CD4-positive, alpha-beta memory T cell (primary cell): ENCODE measurements at regions of chr15 and their contacts with region 1.

Region 1: DNA sequence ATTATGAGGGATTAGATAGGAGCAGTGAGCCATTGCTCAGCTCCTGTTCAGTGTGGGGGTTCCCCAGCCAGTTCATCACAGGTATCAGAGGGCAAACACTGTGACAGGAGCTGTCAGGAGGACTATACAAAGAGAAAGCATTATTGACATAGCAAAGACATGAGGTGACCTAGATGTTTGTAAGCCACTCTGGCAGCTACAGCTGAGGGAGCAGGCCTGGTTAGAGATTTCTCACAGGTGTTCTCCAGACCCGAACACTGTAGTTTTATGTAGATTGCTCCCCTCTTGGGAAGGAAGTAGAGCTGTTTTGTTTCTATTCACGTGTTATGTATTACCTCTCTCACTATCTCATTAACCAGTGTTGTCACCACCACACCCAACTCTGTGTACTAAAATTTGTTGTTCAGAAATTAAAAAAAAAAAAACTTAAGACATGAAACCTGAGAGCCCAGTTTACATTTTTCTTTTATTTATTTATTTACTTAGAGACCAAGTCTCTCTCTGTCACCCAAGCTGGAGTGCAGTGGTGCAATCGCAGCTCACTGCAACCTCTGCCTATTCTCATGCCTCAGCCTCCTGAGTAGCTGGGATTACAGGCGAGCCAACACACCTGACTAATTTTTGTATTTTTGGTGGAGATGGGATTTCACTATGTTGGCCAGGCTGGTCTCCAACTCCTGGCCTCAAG is 123.7 kb downstream of the RBPMS2 start:
- DNase-seq: peak; percentile 53 to 75 (median 64)
- H3K4me3 ChIP-seq: no peak overlapping the region
- H3K4me3 Mint-ChIP-seq: peak overlapping the region in 7 of 8 donors; percentile 57 to 89 (median 75)
- H3K27ac ChIP-seq: peak overlapping the region; percentile 44
- H3K27ac Mint-ChIP-seq: peak overlapping the region; percentile 77 to 94 (median 93)
- H3K4me1 ChIP-seq: peaks cover 50% of the 10 kb centered on the region
- H3K4me1 Mint-ChIP-seq: peaks cover 27 to 46% (median 39%) of the 10 kb centered on the region in 4 donors
- H3K27me3 ChIP-seq: no peaks in the 10 kb centered on the region
- H3K27me3 Mint-ChIP-seq: no peaks in the 10 kb centered on the region

Region 2: DNA sequence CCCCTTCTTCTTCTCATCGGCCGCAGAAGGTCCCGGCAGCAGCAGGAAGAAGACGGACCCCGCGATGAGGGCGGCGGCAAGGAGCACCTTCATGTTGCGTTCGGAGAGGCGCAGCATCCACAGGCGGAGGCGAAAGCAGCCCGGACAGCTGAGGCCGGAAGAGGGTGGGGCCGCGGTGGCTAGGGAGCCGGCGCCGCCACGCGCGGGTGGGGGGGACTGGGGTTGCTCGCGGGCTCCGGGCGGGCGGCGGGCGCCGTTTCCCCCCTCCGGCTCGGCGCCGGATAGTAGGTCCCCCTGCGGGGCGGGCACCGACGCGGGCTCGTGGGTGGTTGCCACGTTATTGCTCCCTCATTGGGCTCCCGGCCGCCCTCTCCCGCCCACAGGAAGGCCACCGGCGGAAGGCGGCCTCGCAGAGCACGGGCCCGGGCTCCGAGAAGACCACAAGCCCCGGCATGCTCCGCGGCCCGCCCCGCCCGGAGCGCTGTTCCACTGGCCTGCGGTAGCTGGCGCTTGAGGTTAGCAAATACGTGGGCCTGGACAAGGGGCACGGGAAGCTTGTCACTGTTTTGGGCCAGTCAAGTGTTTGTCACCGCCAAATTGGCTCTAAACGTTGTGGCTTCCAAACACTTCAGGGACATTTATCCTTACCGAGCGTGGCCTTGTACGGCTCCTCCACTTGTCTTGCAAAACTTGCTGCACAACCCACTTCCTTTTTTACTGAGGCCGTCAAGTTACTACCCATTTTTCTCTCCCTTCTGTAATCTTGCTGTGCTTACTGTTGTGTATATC is 488.7 kb before region 1 on chr15 and contains the start of gene PPIB:
- CTCF ChIA-PET with region 1: no interaction called
- POLR2A ChIA-PET with region 1: no interaction called
- intact Hi-C with region 1: loop called (anchors 10 kb)
- DNase-seq: peak; percentile 96 to 98 (median 97)
- H3K4me3 ChIP-seq: peak within 1 kb of the TSS; percentile 68 to 71
- H3K4me3 Mint-ChIP-seq: peak within 1 kb of the TSS; percentile 81 to 95 (median 90)
- H3K27ac ChIP-seq: peak within 1 kb of the TSS; percentile 80
- H3K27ac Mint-ChIP-seq: peak within 1 kb of the TSS; percentile 85 to 98 (median 96)
- H3K4me1 ChIP-seq: peaks cover 54% of the 10 kb centered on the region
- H3K4me1 Mint-ChIP-seq: peaks cover 28 to 53% (median 40%) of the 10 kb centered on the region in 4 donors
- H3K27me3 ChIP-seq: no peaks in the 10 kb centered on the region
- H3K27me3 Mint-ChIP-seq: no peaks in the 10 kb centered on the region
- total RNA-seq, gene PPIB: 247 to 271 TPM

Region 3: DNA sequence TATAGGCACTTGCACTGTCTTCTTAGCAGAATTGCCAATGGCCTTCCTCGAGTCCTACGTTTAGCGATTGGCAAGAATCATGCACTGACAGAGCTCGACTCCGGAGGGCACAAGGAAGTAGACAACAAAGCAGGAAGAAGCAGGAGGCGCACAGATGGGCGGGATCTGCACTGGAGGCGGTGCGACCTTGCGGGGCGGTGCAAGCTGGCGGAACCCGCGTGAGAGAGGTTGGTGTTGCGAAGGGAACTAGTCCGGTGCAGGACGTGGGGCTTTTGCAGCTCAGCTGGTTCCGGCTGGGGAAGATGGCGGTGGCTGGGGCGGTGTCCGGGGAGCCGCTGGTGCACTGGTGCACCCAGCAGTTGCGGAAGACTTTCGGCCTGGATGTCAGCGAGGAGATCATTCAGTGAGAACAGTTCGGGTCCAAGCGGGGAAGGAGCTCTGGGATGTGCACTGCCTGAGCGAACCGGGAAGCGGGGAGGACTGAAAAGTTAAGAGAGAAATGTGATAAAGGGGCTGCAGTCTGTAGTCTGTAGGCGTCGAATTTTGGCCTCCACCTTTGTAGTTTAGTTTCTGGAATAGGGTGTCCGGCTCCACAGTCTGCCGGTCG is 264.1 kb before region 1 on chr15 and contains the start of gene TRIP4:
- CTCF ChIA-PET with region 1: interaction called, 15 read pairs
- POLR2A ChIA-PET with region 1: interaction called, 6 read pairs
- intact Hi-C with region 1: no loop called
- DNase-seq: peak; percentile 95 to 98 (median 96)
- H3K4me3 ChIP-seq: peak within 1 kb of the TSS; percentile 79 to 89
- H3K4me3 Mint-ChIP-seq: peak within 1 kb of the TSS; percentile 96 to 100 (median 98)
- H3K27ac ChIP-seq: peak within 1 kb of the TSS; percentile 64
- H3K27ac Mint-ChIP-seq: peak within 1 kb of the TSS; percentile 80 to 99 (median 96)
- H3K4me1 ChIP-seq: peaks cover 12% of the 10 kb centered on the region
- H3K4me1 Mint-ChIP-seq: peaks cover 16 to 19% (median 19%) of the 10 kb centered on the region in 4 donors
- H3K27me3 ChIP-seq: no peaks in the 10 kb centered on the region
- H3K27me3 Mint-ChIP-seq: no peaks in the 10 kb centered on the region
- total RNA-seq, gene TRIP4: 28.2 to 29.4 TPM

Region 4: DNA sequence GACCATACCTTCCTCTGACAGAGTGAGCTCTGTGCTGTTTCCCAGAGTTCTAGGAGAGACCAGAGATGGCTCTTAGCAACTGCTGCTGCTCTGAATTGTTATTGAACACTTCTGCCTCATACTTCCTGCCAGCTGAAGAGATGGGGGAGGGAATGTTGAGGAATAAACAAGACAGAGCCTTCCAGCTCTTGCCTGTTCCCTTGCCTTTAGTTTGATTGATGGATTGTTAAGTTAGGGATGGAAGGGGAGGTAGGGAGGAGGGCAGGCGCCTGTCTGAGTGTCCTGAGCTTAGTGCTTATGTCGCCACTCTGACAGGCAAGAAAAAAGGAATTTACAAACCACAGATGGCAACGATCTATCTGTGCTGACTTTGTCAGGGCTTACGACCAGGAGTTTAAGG is 148.5 kb before region 1 on chr15:
- CTCF ChIA-PET with region 1: interaction called, 13 read pairs
- POLR2A ChIA-PET with region 1: interaction called, 5 read pairs
- intact Hi-C with region 1: no loop called
- DNase-seq: peak in 1 of 5 donors; percentile 20
- H3K4me3 ChIP-seq: peak overlapping the region; percentile 23 to 30
- H3K4me3 Mint-ChIP-seq: peak overlapping the region; percentile 49 to 80 (median 68)
- H3K27ac ChIP-seq: peak overlapping the region; percentile 52
- H3K27ac Mint-ChIP-seq: peak overlapping the region; percentile 68 to 94 (median 84)
- H3K4me1 ChIP-seq: peaks cover 82% of the 10 kb centered on the region
- H3K4me1 Mint-ChIP-seq: peaks cover 68 to 91% (median 80%) of the 10 kb centered on the region in 4 donors
- H3K27me3 ChIP-seq: no peaks in the 10 kb centered on the region
- H3K27me3 Mint-ChIP-seq: no peaks in the 10 kb centered on the region

Region 5: GRCh38 chr15:64622410-64623260 is 29.1 kb before region 1 on chr15:
- CTCF ChIA-PET with region 1: interaction called, 5 read pairs
- POLR2A ChIA-PET with region 1: interaction called, 11 read pairs
- intact Hi-C with region 1: loop called (anchors 2 kb)
- DNase-seq: peak; percentile 76 to 84 (median 81)
- H3K4me3 ChIP-seq: peak overlapping the region in 1 of 2 donors; percentile 48
- H3K4me3 Mint-ChIP-seq: peak overlapping the region; percentile 66 to 85 (median 77)
- H3K27ac ChIP-seq: peak overlapping the region; percentile 34
- H3K27ac Mint-ChIP-seq: peak overlapping the region; percentile 83 to 96 (median 93)
- H3K4me1 ChIP-seq: peaks cover 96% of the 10 kb centered on the region
- H3K4me1 Mint-ChIP-seq: peaks cover 66 to 94% (median 84%) of the 10 kb centered on the region in 4 donors
- H3K27me3 ChIP-seq: no peaks in the 10 kb centered on the region
- H3K27me3 Mint-ChIP-seq: no peaks in the 10 kb centered on the region

Region 6: DNA sequence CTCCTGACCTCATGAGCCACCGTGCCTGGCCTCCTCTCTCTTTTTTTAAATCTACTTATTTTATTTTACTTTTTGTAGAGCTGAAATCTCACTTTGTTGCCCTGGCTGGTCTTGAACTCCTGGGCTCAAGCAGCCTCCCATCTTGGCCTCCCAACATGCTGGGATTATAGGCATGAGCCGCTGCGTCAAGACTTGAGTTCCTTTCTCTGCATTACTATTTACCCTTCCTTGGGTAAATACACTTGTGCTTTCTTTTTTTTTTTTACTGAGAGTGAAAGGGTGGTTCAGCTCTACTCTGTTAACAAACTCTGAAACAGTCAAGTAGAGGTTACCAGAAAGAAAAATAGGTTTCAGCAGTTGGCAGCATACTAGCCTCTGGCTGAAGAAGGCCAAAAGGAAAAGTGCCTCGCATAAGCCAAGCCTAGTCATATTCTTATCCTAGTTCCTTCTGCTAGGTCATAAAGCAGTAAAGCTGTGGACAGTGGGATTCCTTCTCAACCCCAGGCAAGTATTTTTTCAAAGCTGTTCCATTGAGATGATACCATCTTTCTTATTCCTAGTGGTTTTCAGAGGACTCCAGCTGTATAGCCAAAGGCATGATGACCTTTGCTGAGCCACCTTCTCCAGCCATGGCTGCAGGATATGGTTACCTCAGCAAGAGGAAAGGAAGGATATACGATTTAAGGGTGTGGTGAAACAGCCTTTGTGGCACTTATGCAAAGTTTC is 11.4 kb before region 1 on chr15:
- CTCF ChIA-PET with region 1: interaction called, 18 read pairs
- POLR2A ChIA-PET with region 1: interaction called, 24 read pairs
- intact Hi-C with region 1: loop called (anchors 2 kb)
- DNase-seq: no peak
- H3K4me3 ChIP-seq: no peak overlapping the region
- H3K4me3 Mint-ChIP-seq: peak overlapping the region in 6 of 8 donors; percentile 9 to 48 (median 34)
- H3K27ac ChIP-seq: no peak overlapping the region
- H3K27ac Mint-ChIP-seq: peak overlapping the region in 6 of 7 donors; percentile 38 to 88 (median 66)
- H3K4me1 ChIP-seq: peaks cover 50% of the 10 kb centered on the region
- H3K4me1 Mint-ChIP-seq: peaks cover 30 to 61% (median 50%) of the 10 kb centered on the region in 4 donors
- H3K27me3 ChIP-seq: no peaks in the 10 kb centered on the region
- H3K27me3 Mint-ChIP-seq: no peaks in the 10 kb centered on the region

Region 7: GRCh38 chr15:64775551-64776401 is 124.1 kb after region 1 on chr15 and contains the start of gene RBPMS2:
- CTCF ChIA-PET with region 1: no interaction called
- POLR2A ChIA-PET with region 1: no interaction called
- intact Hi-C with region 1: no loop called
- DNase-seq: no peak
- H3K4me3 ChIP-seq: peak within 1 kb of the TSS in 1 of 2 donors; percentile 22
- H3K4me3 Mint-ChIP-seq: peak within 1 kb of the TSS; percentile 65 to 80 (median 73)
- H3K27ac ChIP-seq: no peak within 1 kb of the TSS
- H3K27ac Mint-ChIP-seq: peak within 1 kb of the TSS in 1 of 7 donors; percentile 41
- H3K4me1 ChIP-seq: no peaks in the 10 kb centered on the region
- H3K4me1 Mint-ChIP-seq: peaks cover 0 to 13% (median 4%) of the 10 kb centered on the region in 4 donors
- H3K27me3 ChIP-seq: peaks cover 6% of the 10 kb centered on the region
- H3K27me3 Mint-ChIP-seq: peaks cover 17 to 26% of the 10 kb centered on the region in 2 donors
- total RNA-seq, gene RBPMS2: not detected

Region 8: GRCh38 chr15:64950888-64951287 is 299.2 kb after region 1 on chr15:
- CTCF ChIA-PET with region 1: no interaction called
- POLR2A ChIA-PET with region 1: no interaction called
- intact Hi-C with region 1: no loop called
- DNase-seq: no peak
- H3K4me3 ChIP-seq: no peak overlapping the region
- H3K4me3 Mint-ChIP-seq: no peak overlapping the region
- H3K27ac ChIP-seq: no peak overlapping the region
- H3K27ac Mint-ChIP-seq: peak overlapping the region in 5 of 7 donors; percentile 3 to 75 (median 25)
- H3K4me1 ChIP-seq: no peaks in the 10 kb centered on the region
- H3K4me1 Mint-ChIP-seq: peaks cover 0 to 17% (median 4%) of the 10 kb centered on the region in 4 donors
- H3K27me3 ChIP-seq: no peaks in the 10 kb centered on the region
- H3K27me3 Mint-ChIP-seq: no peaks in the 10 kb centered on the region